ENCODE measurements at regions of chr22 and their contacts with region 1.

Region 1: GRCh38 chr22:40346178-40347118 is at the start of gene ADSL:
- DNase-seq: peak; percentile 56
- H3K4me3 ChIP-seq: peak within 1 kb of the TSS; percentile 94
- H3K27ac ChIP-seq: peak within 1 kb of the TSS; percentile 85
- H3K27me3 ChIP-seq: no peaks in the 10 kb centered on the region
- CTCF ChIP-seq: peak; percentile 14; the same call in 1 of the 2 replicates
- polyA plus RNA-seq, gene ADSL: 106 and 116 TPM in 2 replicates

Region 2: GRCh38 chr22:40044102-40044869 is 302.2 kb before region 1 on chr22:
- CTCF ChIA-PET with region 1: interaction called, 16 read pairs
- POLR2A ChIA-PET with region 1: interaction called, 7 read pairs
- DNase-seq: peak; percentile 99
- H3K4me3 ChIP-seq: peak overlapping the region; percentile 96
- H3K27ac ChIP-seq: peak overlapping the region; percentile 78
- H3K27me3 ChIP-seq: peaks cover 23% of the 10 kb centered on the region
- CTCF ChIP-seq: no peak

Region 3: DNA sequence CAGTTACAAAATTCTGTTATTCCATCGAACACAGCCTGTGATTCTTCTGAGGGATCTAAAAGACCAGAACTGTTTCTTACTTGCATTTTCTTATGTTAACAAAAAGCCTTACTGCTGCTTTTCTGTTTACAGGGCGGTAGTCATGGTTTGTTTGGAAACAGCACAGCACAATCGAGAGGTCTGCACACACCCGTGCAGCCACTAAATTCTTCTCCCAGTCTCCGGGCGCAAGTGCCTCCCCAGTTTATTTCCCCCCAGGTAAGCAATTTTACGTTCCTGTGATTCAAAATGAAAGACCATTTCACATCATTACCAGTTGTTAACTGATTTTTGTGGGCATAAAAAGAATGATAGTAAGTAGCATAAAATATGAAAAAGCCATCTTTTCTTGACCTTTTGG is 60.9 kb before region 1 on chr22:
- CTCF ChIA-PET with region 1: no interaction called
- POLR2A ChIA-PET with region 1: interaction called, 10 read pairs
- DNase-seq: no peak
- H3K4me3 ChIP-seq: no peak overlapping the region
- H3K27ac ChIP-seq: no peak overlapping the region
- H3K27me3 ChIP-seq: no peaks in the 10 kb centered on the region
- CTCF ChIP-seq: no peak

Region 4: GRCh38 chr22:40310081-40310767 is 36.2 kb before region 1 on chr22:
- CTCF ChIA-PET with region 1: interaction called, 11 read pairs
- POLR2A ChIA-PET with region 1: no interaction called
- DNase-seq: peak; percentile 84
- H3K4me3 ChIP-seq: peak overlapping the region; percentile 35
- H3K27ac ChIP-seq: peak overlapping the region; percentile 74
- H3K27me3 ChIP-seq: no peaks in the 10 kb centered on the region
- CTCF ChIP-seq: no peak